OCI-LY7 (cell line): ENCODE measurements at regions of chr13 and their contacts with region 1.

Region 1: DNA sequence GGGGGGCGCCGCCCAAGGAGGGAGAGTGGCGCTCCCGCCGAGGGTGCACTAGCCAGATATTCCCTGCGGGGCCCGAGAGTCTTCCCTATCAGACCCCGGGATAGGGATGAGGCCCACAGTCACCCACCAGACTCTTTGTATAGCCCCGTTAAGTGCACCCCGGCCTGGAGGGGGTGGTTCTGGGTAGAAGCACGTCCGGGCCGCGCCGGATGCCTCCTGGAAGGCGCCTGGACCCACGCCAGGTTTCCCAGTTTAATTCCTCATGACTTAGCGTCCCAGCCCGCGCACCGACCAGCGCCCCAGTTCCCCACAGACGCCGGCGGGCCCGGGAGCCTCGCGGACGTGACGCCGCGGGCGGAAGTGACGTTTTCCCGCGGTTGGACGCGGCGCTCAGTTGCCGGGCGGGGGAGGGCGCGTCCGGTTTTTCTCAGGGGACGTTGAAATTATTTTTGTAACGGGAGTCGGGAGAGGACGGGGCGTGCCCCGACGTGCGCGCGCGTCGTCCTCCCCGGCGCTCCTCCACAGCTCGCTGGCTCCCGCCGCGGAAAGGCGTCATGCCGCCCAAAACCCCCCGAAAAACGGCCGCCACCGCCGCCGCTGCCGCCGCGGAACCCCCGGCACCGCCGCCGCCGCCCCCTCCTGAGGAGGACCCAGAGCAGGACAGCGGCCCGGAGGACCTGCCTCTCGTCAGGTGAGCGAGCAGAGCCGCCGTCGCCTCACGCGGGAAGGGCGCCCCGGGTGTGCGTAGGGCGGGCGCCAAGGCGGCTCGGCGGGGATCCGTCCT is at the start of gene RB1:
- DNase-seq: peak; percentile 92
- H3K4me3 ChIP-seq: peak within 1 kb of the TSS; percentile 93
- H3K27ac ChIP-seq: peak within 1 kb of the TSS; percentile 94
- H3K4me1 ChIP-seq: peaks cover 28% of the 10 kb centered on the region
- CTCF ChIP-seq: no peak
- total RNA-seq, gene RB1: 31.7 and 33.5 TPM in 2 replicates

Region 2: DNA sequence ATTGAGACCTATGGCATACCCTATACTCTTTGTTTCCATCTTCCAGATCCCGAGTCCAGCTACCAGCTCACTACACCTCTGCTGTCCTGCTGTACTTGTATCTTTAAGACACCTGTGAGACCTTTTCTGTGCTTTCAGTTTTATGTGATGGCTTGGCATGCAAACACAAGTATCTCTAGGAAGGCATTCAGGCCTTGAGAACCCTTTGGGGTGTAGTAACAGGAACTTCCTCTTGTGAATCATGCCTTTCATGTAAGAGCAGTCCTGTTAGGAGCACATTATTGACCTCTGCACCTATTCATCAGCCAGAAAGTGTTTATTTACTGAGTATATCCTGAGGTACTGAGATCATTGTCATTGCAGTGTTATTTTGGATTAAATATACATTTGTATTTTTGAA is 1319.7 kb before region 1 on chr13:
- CTCF ChIA-PET with region 1: no interaction called
- POLR2A ChIA-PET with region 1: no interaction called
- intact Hi-C with region 1: loop called (anchors 10 kb)
- DNase-seq: peak; percentile 91
- H3K4me3 ChIP-seq: peak overlapping the region; percentile 59
- H3K27ac ChIP-seq: peak overlapping the region; percentile 93
- H3K4me1 ChIP-seq: peaks cover 56% of the 10 kb centered on the region
- CTCF ChIP-seq: no peak

Region 3: DNA sequence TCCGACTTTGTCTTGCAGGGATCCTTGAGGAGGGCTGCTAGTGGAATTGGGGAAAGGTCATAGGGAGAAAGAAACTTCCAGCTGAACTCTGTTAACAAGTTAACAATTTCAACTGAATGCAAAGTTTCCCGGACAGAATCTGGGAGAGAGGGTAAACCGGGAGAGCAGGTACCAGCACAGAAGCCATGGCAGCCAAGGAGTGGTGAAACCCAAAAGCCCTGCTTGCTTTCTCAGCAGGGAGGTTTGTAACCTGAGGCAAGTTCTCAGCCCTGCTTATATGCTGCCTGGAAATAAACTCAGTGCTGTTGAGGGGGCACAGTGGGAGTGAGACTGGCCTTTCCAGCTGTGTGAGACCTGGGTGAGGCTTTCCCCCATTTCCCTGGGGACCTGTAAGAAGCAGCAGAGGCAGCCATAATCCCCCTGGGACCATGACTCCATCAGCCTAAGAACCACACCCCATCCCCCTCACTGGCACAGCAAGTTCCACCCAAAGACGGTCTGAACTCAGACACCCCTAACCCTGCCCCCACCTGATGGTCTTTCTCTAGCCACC is 386.5 kb before region 1 on chr13:
- CTCF ChIA-PET with region 1: no interaction called
- POLR2A ChIA-PET with region 1: no interaction called
- intact Hi-C with region 1: no loop called
- DNase-seq: peak; percentile 7
- H3K4me3 ChIP-seq: no peak overlapping the region
- H3K27ac ChIP-seq: no peak overlapping the region
- H3K4me1 ChIP-seq: no peaks in the 10 kb centered on the region
- CTCF ChIP-seq: no peak

Region 4: DNA sequence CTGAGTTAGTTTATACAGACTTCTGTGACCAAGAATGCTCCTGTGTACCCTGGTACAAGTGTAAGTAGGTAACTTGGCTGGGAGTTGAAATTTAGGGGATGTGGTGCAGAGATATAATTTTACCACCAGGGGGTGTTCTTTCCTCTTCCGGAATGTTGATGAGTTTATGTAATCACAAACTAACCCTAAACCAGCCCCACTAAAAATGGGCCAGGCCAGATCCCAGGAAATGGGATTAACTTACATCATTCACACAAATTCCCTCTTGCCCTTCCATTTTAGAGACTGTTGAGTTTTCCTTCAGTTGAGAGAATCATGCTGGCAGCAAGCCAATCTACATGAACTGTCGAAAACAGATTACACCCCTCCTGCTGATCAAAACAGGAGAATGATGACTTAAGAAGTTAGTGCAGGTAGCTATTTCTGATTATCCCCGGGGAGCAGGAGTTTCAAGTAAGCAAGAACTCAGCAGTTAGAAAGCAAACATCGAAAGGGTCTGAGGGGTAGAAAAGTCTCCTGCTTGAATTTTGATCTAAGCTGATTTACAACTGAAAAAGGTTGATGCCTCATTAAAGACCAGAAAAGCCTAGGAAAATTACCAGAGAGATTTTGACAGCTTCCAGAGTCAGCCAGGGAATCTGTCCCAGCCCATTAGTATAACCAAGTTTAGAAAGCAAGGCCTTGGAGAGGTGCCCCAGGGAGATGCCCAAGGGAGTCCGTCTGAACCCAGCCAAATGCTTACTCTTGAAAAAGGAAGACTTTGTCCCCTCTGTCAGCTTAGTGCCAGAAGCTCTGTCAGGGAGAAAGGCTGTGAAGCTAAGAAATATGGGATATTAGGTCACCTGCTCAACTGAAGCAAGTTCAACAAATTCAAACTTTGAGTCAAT is 176.4 kb before region 1 on chr13:
- CTCF ChIA-PET with region 1: no interaction called
- POLR2A ChIA-PET with region 1: no interaction called
- intact Hi-C with region 1: loop called (anchors 10 kb)
- DNase-seq: peak; percentile 72
- H3K4me3 ChIP-seq: no peak overlapping the region
- H3K27ac ChIP-seq: no peak overlapping the region
- H3K4me1 ChIP-seq: peaks cover 4% of the 10 kb centered on the region
- CTCF ChIP-seq: peak; percentile 96

Region 5: DNA sequence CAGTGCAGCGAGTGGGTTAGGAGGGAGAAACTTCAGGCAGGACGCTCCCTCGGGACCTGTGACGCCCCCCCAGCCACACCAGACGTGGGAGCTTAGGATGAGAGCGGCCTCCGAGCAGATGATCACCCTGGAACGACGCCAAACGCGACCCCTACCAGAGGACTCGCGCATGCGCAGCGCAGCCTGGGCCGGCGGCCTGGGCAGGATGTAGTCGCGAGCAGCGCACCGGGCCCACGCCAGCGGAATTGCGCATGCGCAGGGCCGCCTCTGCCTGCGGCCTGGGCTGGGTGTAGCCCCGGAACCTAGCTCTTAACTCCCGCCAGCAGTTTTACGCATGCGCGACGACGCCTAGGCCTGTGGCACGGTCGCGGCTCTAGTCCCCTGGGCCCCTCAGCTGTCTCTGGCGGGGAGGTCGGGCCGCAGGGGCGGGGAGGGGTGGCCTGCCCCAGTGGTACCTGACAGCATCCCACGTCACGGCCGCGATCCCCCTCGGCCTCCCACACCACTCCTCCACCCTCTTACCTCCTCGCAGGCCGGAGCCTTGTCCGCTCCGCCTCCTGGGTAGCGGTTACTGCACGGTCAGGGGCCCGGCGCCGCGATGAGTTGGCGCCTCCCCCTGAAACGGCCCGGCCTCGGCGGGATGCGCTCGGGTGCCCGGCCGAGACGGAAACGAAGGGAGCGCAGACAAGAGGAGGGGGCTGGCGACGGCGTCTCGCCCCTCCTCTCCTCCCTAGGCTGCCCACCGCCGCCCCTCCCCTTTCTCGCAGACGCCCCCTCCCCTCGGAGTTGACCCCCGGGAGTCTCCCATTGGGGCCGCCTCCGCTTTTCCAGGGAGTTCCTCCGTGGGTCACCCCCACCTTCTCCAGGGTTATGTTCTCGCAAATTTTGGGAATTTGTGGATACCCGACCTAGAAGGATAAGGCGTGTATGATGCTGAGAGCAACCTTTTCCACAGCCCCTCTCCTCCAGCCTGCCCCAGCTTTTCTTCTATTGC is 229.3 kb after region 1 on chr13 and contains the start of gene RCBTB2:
- CTCF ChIA-PET with region 1: no interaction called
- POLR2A ChIA-PET with region 1: interaction called, 5 read pairs
- intact Hi-C with region 1: loop called (anchors 1 kb)
- DNase-seq: peak; percentile 99
- H3K4me3 ChIP-seq: peak within 1 kb of the TSS; percentile 73
- H3K27ac ChIP-seq: peak within 1 kb of the TSS; percentile 80
- H3K4me1 ChIP-seq: peaks cover 59% of the 10 kb centered on the region
- CTCF ChIP-seq: no peak
- total RNA-seq, gene RCBTB2: 4.4 and 9.0 TPM in 2 replicates

Region 6: GRCh38 chr13:48975856-48976575 is 672.5 kb after region 1 on chr13 and contains the start of gene FNDC3A:
- CTCF ChIA-PET with region 1: no interaction called
- POLR2A ChIA-PET with region 1: no interaction called
- intact Hi-C with region 1: loop called (anchors 10 kb)
- DNase-seq: peak; percentile 82
- H3K4me3 ChIP-seq: peak within 1 kb of the TSS; percentile 89
- H3K27ac ChIP-seq: peak within 1 kb of the TSS; percentile 91
- H3K4me1 ChIP-seq: peaks cover 35% of the 10 kb centered on the region
- CTCF ChIP-seq: peak; percentile 43; the same call in 1 of the 2 replicates
- total RNA-seq, gene FNDC3A: 33.0 and 38.7 TPM in 2 replicates